ENCODE measurements at regions of chr11 and their contacts with region 1.

Region 1: GRCh38 chr11:124800226-124800929 is at the start of gene MSANTD2:
- DNase-seq: peak; percentile 65 to 82 (median 74)
- H3K4me3 ChIP-seq: peak within 1 kb of the TSS; percentile 72 to 85 (median 81)
- H3K27ac ChIP-seq: peak within 1 kb of the TSS in 1 of 2 experiments; percentile 68
- H3K4me1 ChIP-seq: peaks cover 11 to 18% (median 15%) of the 10 kb centered on the region in 4 experiments
- H3K27me3 ChIP-seq: peaks cover 0 to 20% (median 16%) of the 10 kb centered on the region in 5 experiments

Region 2: GRCh38 chr11:124238512-124238911 is 561.9 kb before region 1 on chr11:
- CTCF ChIA-PET with region 1: no interaction called
- POLR2A ChIA-PET with region 1: no interaction called
- DNase-seq: peak in 2 of 3 donors; percentile 57 to 73
- H3K4me3 ChIP-seq: no peak overlapping the region
- H3K27ac ChIP-seq: no peak overlapping the region
- H3K4me1 ChIP-seq: no peaks in the 10 kb centered on the region
- H3K27me3 ChIP-seq: no peaks in the 10 kb centered on the region

Region 3: GRCh38 chr11:124644426-124645280 is 155.7 kb before region 1 on chr11:
- CTCF ChIA-PET with region 1: interaction called, 17 read pairs
- POLR2A ChIA-PET with region 1: no interaction called
- DNase-seq: peak; percentile 60 to 69 (median 61)
- H3K4me3 ChIP-seq: peak overlapping the region in 2 of 7 experiments; percentile 4 to 48
- H3K27ac ChIP-seq: no peak overlapping the region
- H3K4me1 ChIP-seq: peaks cover 0 to 29% (median 13%) of the 10 kb centered on the region in 4 experiments
- H3K27me3 ChIP-seq: no peaks in the 10 kb centered on the region

Region 4: DNA sequence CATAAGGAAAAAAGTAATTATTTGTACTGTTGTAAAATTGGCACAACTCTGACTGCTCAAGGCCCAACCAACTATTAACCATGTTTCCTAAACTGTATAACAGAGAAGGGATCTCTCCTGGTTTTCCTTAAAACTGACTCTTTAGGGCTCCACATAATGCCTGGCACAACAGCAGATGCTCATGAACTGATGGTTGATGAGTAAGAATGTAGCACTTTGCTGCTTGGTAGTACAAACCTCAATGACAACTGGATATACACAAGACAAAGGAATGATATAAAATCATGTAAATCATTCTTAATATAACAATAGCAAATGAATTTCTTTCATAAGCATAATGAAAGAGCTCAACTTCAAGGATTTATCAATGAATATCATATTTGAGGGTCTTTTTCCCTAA is 11.9 kb before region 1 on chr11:
- CTCF ChIA-PET with region 1: interaction called, 17 read pairs
- POLR2A ChIA-PET with region 1: no interaction called
- DNase-seq: no peak
- H3K4me3 ChIP-seq: no peak overlapping the region
- H3K27ac ChIP-seq: no peak overlapping the region
- H3K4me1 ChIP-seq: no peaks in the 10 kb centered on the region
- H3K27me3 ChIP-seq: peaks cover 0 to 2% (median 0%) of the 10 kb centered on the region in 5 experiments

Measured in common myeloid progenitor, CD34-positive (primary cell).